Endothelial cell of umbilical vein (primary cell): ENCODE measurements at regions of chr14 and their contacts with region 1.

Region 1: DNA sequence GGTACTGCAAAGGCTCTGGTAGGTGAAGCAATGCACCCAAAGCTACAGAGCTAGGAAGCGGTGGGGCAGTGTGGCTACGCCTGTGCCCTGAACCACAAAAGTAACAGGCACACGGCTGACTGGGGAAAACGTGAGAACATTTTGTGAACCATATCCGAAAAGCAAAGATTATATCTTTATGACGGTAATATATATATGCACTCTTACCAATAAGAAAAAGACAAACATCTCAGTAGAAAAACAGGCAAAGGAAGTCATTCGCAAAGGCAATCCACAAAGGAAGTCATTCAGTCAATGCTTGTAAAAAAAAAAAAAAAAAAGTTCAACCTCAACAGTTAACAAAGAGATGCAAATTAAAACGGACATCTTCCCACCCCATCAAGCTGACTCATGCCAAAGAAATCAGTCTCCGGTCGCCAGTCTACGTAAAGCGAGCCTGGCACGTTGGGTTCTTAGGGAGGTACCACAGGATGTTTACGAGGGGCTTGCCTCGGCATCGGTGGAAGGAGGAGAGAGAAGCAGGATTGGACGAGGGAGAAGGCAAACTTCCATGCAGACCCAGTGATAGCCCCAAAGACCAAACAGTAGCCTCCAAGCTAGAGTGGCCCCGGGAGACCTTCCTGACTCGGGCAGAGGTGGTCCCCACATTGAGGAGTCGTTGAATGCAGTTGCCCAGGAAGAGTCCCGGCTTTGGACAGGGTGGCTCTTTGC is 39.4 kb upstream of the PPP2R5C start:
- DNase-seq: peak; percentile 80
- H3K4me3 ChIP-seq: no peak overlapping the region
- H3K27ac ChIP-seq: no peak overlapping the region
- H3K4me1 ChIP-seq: peaks cover 12% of the 10 kb centered on the region
- H3K27me3 ChIP-seq: peaks cover 26 to 28% of the 10 kb centered on the region in 2 experiments
- CTCF ChIP-seq: no peak
- POLR2A ChIP-seq: no peak

Region 2: DNA sequence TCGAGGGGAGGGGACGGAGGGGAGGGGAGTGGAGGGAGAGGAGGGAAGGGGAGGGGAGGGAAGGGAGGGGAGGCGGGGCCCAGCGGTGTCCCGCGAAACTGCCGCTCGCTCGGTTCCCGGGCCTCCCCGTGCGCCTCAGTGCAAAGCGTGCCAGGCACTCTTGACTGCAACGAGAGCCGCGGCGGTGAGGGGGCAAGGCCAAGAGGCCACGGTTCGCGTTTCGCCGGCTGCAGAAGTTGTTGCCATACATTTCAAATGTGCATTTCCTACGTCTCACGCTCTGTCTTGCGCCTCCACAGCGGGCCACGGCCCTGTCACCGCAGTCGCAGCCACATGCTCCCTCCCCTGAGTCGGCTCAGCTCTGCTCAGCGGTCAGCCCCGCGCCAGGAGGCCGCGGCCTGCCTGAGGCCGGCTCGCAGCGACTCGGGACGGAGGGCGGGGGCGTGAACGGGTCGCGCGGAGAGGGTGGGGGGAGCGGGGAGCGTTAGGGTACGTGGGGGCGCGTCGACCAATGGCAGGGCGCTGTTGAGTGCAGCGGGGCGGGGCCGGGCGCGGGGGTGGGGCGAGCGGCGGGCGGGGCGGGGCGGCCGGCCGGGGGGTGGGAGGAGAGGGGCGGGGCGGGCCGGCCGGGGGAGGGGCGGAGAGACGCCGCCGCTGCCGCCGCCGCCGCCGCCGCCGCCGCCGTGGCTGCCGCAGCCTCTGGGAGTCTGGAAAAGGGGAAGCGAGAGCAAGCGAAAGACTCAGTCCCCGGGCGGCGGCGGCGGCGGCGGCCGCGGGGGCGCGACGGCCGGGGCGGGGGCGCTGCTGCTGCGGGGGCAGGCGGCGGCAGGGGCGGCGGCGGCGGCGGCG is 39.1 kb after region 1 on chr14 and contains the start of gene PPP2R5C:
- CTCF ChIA-PET with region 1: no interaction called
- POLR2A ChIA-PET with region 1: no interaction called
- dilution Hi-C with region 1: no loop called
- intact Hi-C with region 1: loop called (anchors 5 kb)
- DNase-seq: peak; percentile 83
- H3K4me3 ChIP-seq: peak within 1 kb of the TSS; percentile 50 to 64 (median 52)
- H3K27ac ChIP-seq: no peak within 1 kb of the TSS
- H3K4me1 ChIP-seq: peaks cover 6% of the 10 kb centered on the region
- H3K27me3 ChIP-seq: peaks cover 13 to 32% of the 10 kb centered on the region in 2 experiments
- CTCF ChIP-seq: no peak
- POLR2A ChIP-seq: no peak
- total RNA-seq, gene PPP2R5C: 83.6 and 89.0 TPM in 2 replicates